Activated naive CD4-positive, alpha-beta T cell treated with anti-CD3 and anti-CD28 coated beads for 36 hours (primary cell): ENCODE measurements at regions of chr2 and their contacts with region 1.

Region 1: GRCh38 chr2:156341452-156342253 is 9.1 kb upstream of the NR4A2 start:
- DNase-seq: peak; percentile 94
- H3K4me3 Mint-ChIP-seq: peak overlapping the region; percentile 84
- H3K27ac Mint-ChIP-seq: peak overlapping the region; percentile 96
- H3K4me1 Mint-ChIP-seq: peaks cover 50% of the 10 kb centered on the region
- H3K27me3 Mint-ChIP-seq: no peaks in the 10 kb centered on the region

Region 2: DNA sequence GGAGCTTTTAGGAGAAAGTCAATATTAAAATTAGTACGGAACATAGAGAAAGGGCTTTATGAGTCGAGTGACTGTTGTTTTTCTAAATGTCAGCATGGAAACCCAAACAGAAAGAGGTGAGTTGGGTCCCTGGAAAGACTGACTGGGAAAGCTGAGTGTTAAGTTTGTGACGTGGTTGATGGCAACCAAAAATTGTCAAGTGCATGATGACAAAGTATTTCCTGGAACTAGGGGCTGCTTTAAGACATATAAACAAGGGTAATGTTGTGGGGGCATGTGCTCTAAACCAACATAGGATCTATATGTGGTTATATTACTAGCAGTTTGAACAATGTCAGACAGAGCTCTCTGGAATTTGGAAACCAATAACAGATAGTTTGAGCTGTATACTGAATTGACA is 43.6 kb after region 1 on chr2:
- CTCF ChIA-PET with region 1: interaction called, 3 read pairs
- intact Hi-C with region 1: loop called (anchors 1 kb)
- DNase-seq: peak; percentile 57
- H3K4me3 Mint-ChIP-seq: no peak overlapping the region
- H3K27ac Mint-ChIP-seq: peak overlapping the region; percentile 80
- H3K4me1 Mint-ChIP-seq: peaks cover 20% of the 10 kb centered on the region
- H3K27me3 Mint-ChIP-seq: no peaks in the 10 kb centered on the region

Region 3: GRCh38 chr2:156435715-156436496 is 94.3 kb after region 1 on chr2 and contains the start of gene GPD2:
- CTCF ChIA-PET with region 1: interaction called, 4 read pairs
- intact Hi-C with region 1: loop called (anchors 1 kb)
- DNase-seq: peak; percentile 56
- H3K4me3 Mint-ChIP-seq: peak within 1 kb of the TSS; percentile 94
- H3K27ac Mint-ChIP-seq: peak within 1 kb of the TSS; percentile 92
- H3K4me1 Mint-ChIP-seq: peaks cover 30% of the 10 kb centered on the region
- H3K27me3 Mint-ChIP-seq: no peaks in the 10 kb centered on the region
- total RNA-seq, gene GPD2: 18.8 to 19.9 TPM

Region 4: GRCh38 chr2:156490466-156490840 is 148.8 kb after region 1 on chr2:
- CTCF ChIA-PET with region 1: no interaction called
- intact Hi-C with region 1: loop called (anchors 2 kb)
- DNase-seq: no peak
- H3K4me3 Mint-ChIP-seq: no peak overlapping the region
- H3K27ac Mint-ChIP-seq: no peak overlapping the region
- H3K4me1 Mint-ChIP-seq: peaks cover 40% of the 10 kb centered on the region
- H3K27me3 Mint-ChIP-seq: no peaks in the 10 kb centered on the region

Region 5: DNA sequence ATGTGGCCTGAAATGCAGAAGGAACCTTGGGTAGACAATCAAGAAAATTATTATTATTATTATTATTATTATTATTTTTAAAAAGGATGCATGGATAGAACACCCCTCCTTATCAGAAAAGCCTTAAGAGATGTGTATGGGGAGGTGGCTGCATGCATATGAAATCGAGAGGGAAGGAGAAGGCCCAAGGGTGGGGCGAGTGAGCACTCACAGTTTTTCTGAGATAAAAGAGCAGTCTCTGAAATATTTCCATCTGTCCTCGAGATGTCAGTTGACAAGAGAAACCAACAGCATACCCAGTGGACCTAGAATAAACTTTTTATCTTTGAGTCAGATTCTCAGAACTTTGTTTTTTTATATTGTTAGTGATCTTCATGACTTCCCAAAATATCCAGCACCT is 377.4 kb after region 1 on chr2:
- CTCF ChIA-PET with region 1: no interaction called
- intact Hi-C with region 1: no loop called
- DNase-seq: no peak
- H3K4me3 Mint-ChIP-seq: no peak overlapping the region
- H3K27ac Mint-ChIP-seq: no peak overlapping the region
- H3K4me1 Mint-ChIP-seq: no peaks in the 10 kb centered on the region
- H3K27me3 Mint-ChIP-seq: peaks cover 10% of the 10 kb centered on the region

Region 6: DNA sequence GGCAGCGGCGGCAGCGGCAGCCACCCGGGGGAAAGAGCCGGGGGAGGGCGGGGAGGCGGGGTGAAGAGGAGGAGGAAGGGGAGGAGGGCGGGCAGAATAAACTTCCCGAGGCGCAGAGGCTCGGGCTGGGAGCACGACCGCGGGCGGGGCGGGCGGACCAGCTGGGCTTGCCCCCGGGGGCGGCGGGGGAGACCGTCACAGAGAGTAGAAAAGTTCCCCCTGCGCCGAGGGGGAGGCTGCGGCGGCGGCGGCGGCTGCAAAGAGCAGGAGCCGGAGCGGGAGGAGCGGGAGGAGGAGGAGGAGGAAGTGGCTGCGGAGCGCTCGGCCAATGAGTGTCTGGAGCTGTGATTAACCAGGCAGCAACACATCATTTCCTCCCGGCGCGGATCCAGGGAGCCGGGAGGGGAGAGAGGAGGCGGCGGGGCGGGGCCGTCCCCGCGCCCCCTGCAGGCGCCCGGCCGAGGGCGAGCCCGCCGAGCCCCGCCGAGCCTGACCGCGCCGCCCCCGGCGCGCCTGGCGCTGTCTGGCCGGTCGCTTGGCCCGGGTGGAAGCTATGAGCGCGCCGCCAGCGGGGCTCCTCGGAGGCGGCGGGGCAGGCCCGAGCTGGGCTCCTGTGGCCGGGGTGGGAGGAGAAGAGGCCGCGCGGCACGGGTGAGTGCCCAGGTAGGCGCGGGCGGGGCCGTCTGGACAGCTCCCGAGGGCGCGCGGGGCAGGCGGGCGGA is 1534.6 kb after region 1 on chr2 and contains the start of gene ACVR1:
- CTCF ChIA-PET with region 1: no interaction called
- intact Hi-C with region 1: loop called (anchors 5 kb)
- DNase-seq: peak; percentile 91
- H3K4me3 Mint-ChIP-seq: peak within 1 kb of the TSS; percentile 94
- H3K27ac Mint-ChIP-seq: peak within 1 kb of the TSS; percentile 88
- H3K4me1 Mint-ChIP-seq: peaks cover 51% of the 10 kb centered on the region
- H3K27me3 Mint-ChIP-seq: no peaks in the 10 kb centered on the region
- total RNA-seq, gene ACVR1: 19.0 to 20.8 TPM